ENCODE measurements at regions of chr12 and their contacts with region 1.

Region 1: GRCh38 chr12:51951199-51951842 is at the start of gene ACVR1B:
- DNase-seq: peak; percentile 88 to 92 (median 89)
- H3K4me3 ChIP-seq: peak within 1 kb of the TSS; percentile 61 to 83
- H3K4me3 Mint-ChIP-seq: peak within 1 kb of the TSS; percentile 87 to 98 (median 95)
- H3K27ac ChIP-seq: peak within 1 kb of the TSS; percentile 63
- H3K27ac Mint-ChIP-seq: peak within 1 kb of the TSS; percentile 49 to 97 (median 95)
- H3K4me1 ChIP-seq: peaks cover 30% of the 10 kb centered on the region
- H3K4me1 Mint-ChIP-seq: peaks cover 29 to 52% (median 40%) of the 10 kb centered on the region in 4 donors
- H3K27me3 ChIP-seq: no peaks in the 10 kb centered on the region
- H3K27me3 Mint-ChIP-seq: peaks cover 0 to 2% of the 10 kb centered on the region in 2 donors
- total RNA-seq, gene ACVR1B: 10.8 to 12.6 TPM

Region 2: DNA sequence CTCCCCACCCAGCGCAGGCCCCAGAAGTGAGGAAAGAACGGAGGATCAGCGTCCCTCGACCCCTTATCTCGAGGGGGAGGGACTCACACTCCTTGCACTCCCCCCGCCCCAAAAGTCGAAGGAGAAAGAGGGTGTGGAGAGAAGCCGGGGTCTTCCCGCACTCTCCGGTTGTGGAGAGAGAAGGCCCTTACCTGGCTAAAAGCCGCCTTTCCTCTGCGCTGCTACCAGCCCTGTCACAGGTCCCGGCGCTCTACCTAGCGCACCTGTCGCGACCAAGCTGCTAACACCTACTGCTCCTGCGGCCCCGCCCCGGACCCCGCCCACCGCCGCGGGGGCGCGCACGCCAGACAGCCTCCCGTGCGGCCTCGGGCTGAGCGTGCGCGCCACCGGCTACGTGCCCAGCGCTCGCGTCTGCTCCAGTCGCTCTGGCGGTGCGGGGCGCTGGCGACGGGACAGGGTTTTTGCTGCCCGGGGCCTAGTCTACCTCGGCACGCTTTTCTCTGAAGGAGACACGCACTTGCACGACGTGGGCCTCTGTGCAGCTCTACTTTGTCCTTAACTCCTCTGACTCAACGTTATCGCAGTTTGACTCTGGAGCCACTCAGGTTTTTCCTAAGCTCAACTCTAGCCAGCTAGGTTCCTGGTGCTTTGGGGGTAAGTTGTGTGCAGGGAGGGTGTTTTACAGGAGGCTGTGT is 1667.9 kb before region 1 on chr12 and contains the start of gene LIMA1:
- CTCF ChIA-PET with region 1: no interaction called
- POLR2A ChIA-PET with region 1: no interaction called
- intact Hi-C with region 1: loop called (anchors 5 kb)
- DNase-seq: peak; percentile 91 to 93 (median 91)
- H3K4me3 ChIP-seq: peak within 1 kb of the TSS; percentile 58 to 61
- H3K4me3 Mint-ChIP-seq: peak within 1 kb of the TSS; percentile 91 to 96 (median 92)
- H3K27ac ChIP-seq: peak within 1 kb of the TSS; percentile 70
- H3K27ac Mint-ChIP-seq: peak within 1 kb of the TSS; percentile 38 to 95 (median 87)
- H3K4me1 ChIP-seq: peaks cover 17% of the 10 kb centered on the region
- H3K4me1 Mint-ChIP-seq: peaks cover 9 to 18% (median 14%) of the 10 kb centered on the region in 4 donors
- H3K27me3 ChIP-seq: no peaks in the 10 kb centered on the region
- H3K27me3 Mint-ChIP-seq: no peaks in the 10 kb centered on the region
- total RNA-seq, gene LIMA1: 11.5 to 14.9 TPM

Region 3: GRCh38 chr12:51793201-51793600 is 158.1 kb before region 1 on chr12:
- CTCF ChIA-PET with region 1: no interaction called
- POLR2A ChIA-PET with region 1: no interaction called
- intact Hi-C with region 1: no loop called
- DNase-seq: no peak
- H3K4me3 ChIP-seq: no peak overlapping the region
- H3K4me3 Mint-ChIP-seq: no peak overlapping the region
- H3K27ac ChIP-seq: no peak overlapping the region
- H3K27ac Mint-ChIP-seq: no peak overlapping the region
- H3K4me1 ChIP-seq: no peaks in the 10 kb centered on the region
- H3K4me1 Mint-ChIP-seq: no peaks in the 10 kb centered on the region
- H3K27me3 ChIP-seq: no peaks in the 10 kb centered on the region
- H3K27me3 Mint-ChIP-seq: peaks cover 0 to 2% of the 10 kb centered on the region in 2 donors

Region 4: DNA sequence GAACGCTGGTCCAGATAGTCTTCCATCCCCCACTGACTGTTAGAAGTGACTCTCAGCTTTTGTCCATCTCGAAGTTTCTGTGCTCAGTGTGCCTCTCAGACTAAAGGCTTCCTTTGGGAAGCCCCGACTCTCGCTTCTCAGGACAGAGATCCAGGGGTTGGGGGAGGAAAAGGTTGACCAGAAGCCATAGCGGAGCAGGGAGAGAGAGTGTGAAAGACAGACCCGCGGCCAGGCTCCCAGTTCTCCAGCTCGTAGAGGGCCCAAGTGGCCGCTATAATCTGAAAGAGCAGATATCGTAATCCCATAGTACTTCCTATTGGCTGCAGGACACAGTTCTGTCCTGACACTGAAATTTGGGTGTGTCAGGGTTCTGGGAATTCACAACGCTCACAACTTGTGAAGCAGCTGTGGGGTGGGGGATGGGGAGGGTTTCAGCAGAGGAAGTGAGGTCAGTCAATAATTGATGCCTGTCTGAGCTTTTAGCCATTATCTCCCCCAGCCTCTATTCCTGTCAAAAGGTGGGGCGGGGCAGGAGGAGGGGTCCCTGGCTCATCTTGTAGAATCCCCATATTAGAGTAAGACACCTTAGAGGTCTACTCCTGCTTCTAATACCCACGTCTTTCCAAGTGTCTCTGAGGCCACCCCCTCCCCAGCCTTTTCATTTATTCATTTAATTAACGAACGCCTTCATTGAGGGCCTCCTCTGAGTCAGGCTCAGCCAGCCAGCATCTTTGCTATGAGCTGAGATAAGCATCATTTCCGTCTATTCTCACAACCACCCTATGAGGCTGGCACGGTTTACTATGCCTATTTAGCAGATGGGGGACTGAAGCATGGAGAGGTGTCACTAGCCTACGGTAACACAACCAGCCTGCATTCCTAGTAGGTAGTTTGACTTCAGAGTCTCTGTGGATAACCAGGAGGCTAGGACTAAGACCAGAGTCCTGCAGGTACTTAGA is 45.6 kb before region 1 on chr12:
- CTCF ChIA-PET with region 1: no interaction called
- POLR2A ChIA-PET with region 1: no interaction called
- intact Hi-C with region 1: no loop called
- DNase-seq: no peak
- H3K4me3 ChIP-seq: no peak overlapping the region
- H3K4me3 Mint-ChIP-seq: no peak overlapping the region
- H3K27ac ChIP-seq: no peak overlapping the region
- H3K27ac Mint-ChIP-seq: no peak overlapping the region
- H3K4me1 ChIP-seq: no peaks in the 10 kb centered on the region
- H3K4me1 Mint-ChIP-seq: peaks cover 0 to 8% (median 4%) of the 10 kb centered on the region in 4 donors
- H3K27me3 ChIP-seq: peaks cover 21% of the 10 kb centered on the region
- H3K27me3 Mint-ChIP-seq: peaks cover 12 to 29% of the 10 kb centered on the region in 2 donors

Region 5: GRCh38 chr12:51970904-51971646 is 19.8 kb after region 1 on chr12:
- CTCF ChIA-PET with region 1: interaction called, 10 read pairs
- POLR2A ChIA-PET with region 1: interaction called, 6 read pairs
- intact Hi-C with region 1: loop called (anchors 1 kb)
- DNase-seq: peak; percentile 50 to 72 (median 53)
- H3K4me3 ChIP-seq: no peak overlapping the region
- H3K4me3 Mint-ChIP-seq: peak overlapping the region; percentile 31 to 86 (median 66)
- H3K27ac ChIP-seq: peak overlapping the region; percentile 12
- H3K27ac Mint-ChIP-seq: peak overlapping the region; percentile 66 to 91 (median 84)
- H3K4me1 ChIP-seq: peaks cover 62% of the 10 kb centered on the region
- H3K4me1 Mint-ChIP-seq: peaks cover 56 to 72% (median 62%) of the 10 kb centered on the region in 4 donors
- H3K27me3 ChIP-seq: no peaks in the 10 kb centered on the region
- H3K27me3 Mint-ChIP-seq: no peaks in the 10 kb centered on the region

Measured in CD4-positive, alpha-beta memory T cell (primary cell).